HepG2 (cell line): ENCODE measurements at regions of chr2 and their contacts with region 1.

Region 1: DNA sequence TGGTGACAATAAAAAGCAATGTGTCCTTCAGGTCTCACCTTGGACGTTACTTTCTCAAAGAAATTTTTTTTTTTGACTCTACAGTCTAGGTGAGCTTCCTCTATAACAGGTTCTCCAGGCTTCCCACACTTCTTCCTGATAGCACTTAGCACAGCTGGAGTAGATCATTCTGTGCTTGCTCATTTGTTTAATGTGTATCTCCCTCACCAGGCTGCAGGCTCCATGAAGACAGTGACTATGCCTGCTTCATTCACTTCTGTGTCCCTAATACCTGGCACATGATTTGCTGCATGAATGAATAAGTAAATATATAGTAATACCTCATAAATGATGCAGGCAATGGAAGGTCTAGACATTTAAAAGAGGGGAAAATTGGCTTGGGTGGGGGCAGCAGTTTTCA is 109.9 kb upstream of the CD302 start:
- DNase-seq: no peak
- ATAC-seq: no peak
- H3K4me3 ChIP-seq: no peak overlapping the region
- H3K27ac ChIP-seq: no peak overlapping the region
- H3K4me1 ChIP-seq: peaks cover 35% of the 10 kb centered on the region
- H3K27me3 ChIP-seq: no peaks in the 10 kb centered on the region
- CTCF ChIP-seq: no peak
- EP300 ChIP-seq: no peak
- POLR2A ChIP-seq: no peak
- RAD21 ChIP-seq: no peak

Region 2: DNA sequence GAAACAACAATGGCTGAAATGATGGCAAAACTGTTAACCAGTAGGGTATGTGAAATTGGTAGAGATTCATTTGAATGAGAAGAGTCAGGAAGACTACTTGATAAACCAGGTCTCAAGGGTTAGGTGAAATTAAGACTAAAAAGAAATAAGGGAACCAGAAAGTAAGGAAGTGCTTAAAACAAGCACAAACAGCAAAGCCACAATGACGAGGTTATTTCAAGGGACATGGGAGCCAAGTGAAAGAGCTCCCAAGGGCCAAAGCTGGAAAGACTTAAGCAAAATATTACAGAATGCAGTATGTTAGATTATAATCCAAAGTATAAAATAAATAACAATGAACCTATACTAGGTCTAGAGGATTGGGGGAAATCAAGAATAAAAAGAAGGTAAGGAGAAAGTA is 90.6 kb before region 1 on chr2:
- CTCF ChIA-PET with region 1: no interaction called
- POLR2A ChIA-PET with region 1: interaction called, 3 read pairs
- in situ Hi-C with region 1: no loop called
- intact Hi-C with region 1: loop called (anchors 1 kb)
- DNase-seq: no peak
- ATAC-seq: no peak
- H3K4me3 ChIP-seq: no peak overlapping the region
- H3K27ac ChIP-seq: no peak overlapping the region
- H3K4me1 ChIP-seq: peaks cover 7% of the 10 kb centered on the region
- H3K27me3 ChIP-seq: no peaks in the 10 kb centered on the region; a peak in 1 of 5 replicates
- CTCF ChIP-seq: no peak
- EP300 ChIP-seq: no peak
- POLR2A ChIP-seq: no peak
- RAD21 ChIP-seq: no peak

Region 3: GRCh38 chr2:159891917-159892730 is 15.8 kb before region 1 on chr2:
- CTCF ChIA-PET with region 1: no interaction called
- POLR2A ChIA-PET with region 1: no interaction called
- in situ Hi-C with region 1: no loop called
- intact Hi-C with region 1: loop called (anchors 2 kb)
- DNase-seq: no peak
- ATAC-seq: no peak
- H3K4me3 ChIP-seq: no peak overlapping the region
- H3K27ac ChIP-seq: no peak overlapping the region
- H3K4me1 ChIP-seq: peaks cover 39% of the 10 kb centered on the region
- H3K27me3 ChIP-seq: peaks cover 0 to 10% of the 10 kb centered on the region in 2 experiments; a peak in 2 of 5 replicates
- CTCF ChIP-seq: no peak
- EP300 ChIP-seq: no peak
- POLR2A ChIP-seq: no peak
- RAD21 ChIP-seq: no peak

Region 4: GRCh38 chr2:159921752-159922404 is 14.0 kb after region 1 on chr2:
- CTCF ChIA-PET with region 1: no interaction called
- POLR2A ChIA-PET with region 1: no interaction called
- in situ Hi-C with region 1: no loop called
- intact Hi-C with region 1: no loop called
- DNase-seq: peak; percentile 61
- ATAC-seq: peak; percentile 99
- H3K4me3 ChIP-seq: no peak overlapping the region
- H3K27ac ChIP-seq: no peak overlapping the region
- H3K4me1 ChIP-seq: peaks cover 15% of the 10 kb centered on the region
- H3K27me3 ChIP-seq: peaks cover 4% of the 10 kb centered on the region in 2 experiments; a peak in 4 of 5 replicates
- CTCF ChIP-seq: peak; percentile 98
- EP300 ChIP-seq: no peak
- POLR2A ChIP-seq: no peak
- RAD21 ChIP-seq: peak; percentile 90